Posterior cingulate gyrus (tissue), 11 donors: ENCODE measurements at regions of chr9 and their contacts with region 1.

Region 1: GRCh38 chr9:127199001-127199791 is 65.4 kb upstream of the GARNL3 start:
- DNase-seq: peak; percentile 51 to 96 (median 80)

Region 2: GRCh38 chr9:126939821-126940221 is 259.4 kb before region 1 on chr9:
- intact Hi-C with region 1: loop called (anchors 1 kb)
- DNase-seq: no peak

Region 3: DNA sequence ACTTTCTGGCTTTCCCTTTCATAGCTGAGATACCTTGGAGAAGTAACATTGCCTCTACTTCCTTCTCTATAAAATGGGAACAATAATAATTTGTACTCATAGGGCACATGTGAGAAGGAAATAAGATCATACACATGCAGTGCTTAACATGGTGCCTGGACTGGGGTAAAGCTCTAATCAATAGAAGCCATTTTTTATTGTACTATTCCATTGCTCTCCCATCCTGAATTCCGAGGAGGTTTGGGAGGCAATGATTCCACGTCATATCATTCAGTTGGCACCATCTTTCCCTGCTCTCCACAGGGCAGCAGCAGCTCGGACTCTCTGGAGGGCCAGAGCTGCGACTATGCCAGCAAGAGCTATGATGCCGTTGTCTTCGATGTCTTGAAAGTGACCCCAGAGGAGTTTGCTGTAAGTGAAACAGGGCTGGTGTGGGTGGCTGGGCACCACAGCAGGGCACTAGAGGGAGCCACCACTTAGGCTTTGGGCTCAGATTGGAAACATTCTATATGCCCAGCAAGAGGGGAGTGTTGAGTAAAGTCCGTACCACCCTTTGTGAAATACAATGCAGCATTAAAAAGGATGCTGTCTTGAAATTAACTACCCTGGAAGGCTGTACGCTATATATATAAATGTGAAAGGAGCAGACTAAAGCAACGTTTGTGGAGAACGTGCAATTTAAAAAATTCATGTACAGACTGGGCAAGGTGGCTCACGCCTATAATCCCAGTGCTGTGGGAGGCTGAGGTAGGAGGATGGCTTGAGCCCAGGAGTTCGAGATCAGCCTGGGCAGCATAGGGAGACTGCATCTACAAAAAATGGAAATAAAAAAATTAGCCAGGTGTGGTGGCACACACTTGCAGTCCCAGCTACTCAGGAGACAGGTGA is 233.4 kb before region 1 on chr9:
- intact Hi-C with region 1: loop called (anchors 2 kb)
- DNase-seq: peak in 9 of 10 donors; percentile 37 to 95 (median 63)

Region 4: GRCh38 chr9:127159325-127159801 is 39.8 kb before region 1 on chr9:
- intact Hi-C with region 1: no loop called
- DNase-seq: peak; percentile 48 to 95 (median 69)

Region 5: GRCh38 chr9:127347831-127348779 is 148.9 kb after region 1 on chr9:
- intact Hi-C with region 1: no loop called
- DNase-seq: no peak